ENCODE measurements at regions of chr19 and their contacts with region 1.

Region 1: DNA sequence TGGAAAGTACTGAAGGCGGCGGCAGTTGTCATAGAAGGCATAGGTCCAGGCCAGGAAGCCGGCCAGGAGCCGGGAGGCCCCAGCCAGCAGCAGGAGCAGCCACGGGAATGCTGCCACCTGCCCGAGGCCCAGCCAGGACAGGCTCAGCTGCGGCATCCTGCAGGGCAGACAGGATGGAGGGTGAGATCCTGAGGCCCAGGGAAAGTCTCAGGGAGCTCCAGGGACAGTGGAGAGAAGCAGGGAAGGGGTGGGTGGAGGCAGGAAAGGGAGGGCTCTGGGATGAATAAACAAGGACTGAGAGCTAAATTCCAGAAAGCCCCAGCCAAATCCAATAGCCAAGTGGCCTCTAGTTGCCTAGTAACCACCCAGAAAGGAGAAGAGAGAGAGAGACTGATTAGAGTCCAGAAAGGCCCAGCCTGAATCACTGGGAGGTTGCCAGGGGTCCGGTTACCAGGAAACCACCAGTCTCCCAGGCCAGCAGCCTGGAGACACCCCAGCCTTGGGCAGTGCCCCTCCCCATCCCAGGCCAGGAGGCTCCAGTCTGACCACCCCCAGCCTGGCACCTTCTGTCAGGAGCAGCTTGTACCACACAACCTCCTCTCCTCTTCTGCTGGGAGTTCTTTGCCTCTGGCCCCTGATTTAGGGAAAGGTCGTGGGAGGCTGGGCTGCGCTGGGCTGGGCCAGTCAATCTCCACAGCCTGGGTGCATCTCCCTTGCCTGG is 7.5 kb upstream of the OR10H5 start:
- DNase-seq: peak; percentile 50 to 90 (median 82)
- H3K4me3 ChIP-seq: peak overlapping the region in 26 of 59 donors; percentile 3 to 47 (median 32)
- H3K27ac ChIP-seq: peak overlapping the region; percentile 43 to 94 (median 84)
- H3K27me3 ChIP-seq: peaks cover 0 to 2% (median 0%) of the 10 kb centered on the region in 45 donors
- CTCF ChIP-seq: peak in 1 of 56 donors; percentile 9

Region 2: DNA sequence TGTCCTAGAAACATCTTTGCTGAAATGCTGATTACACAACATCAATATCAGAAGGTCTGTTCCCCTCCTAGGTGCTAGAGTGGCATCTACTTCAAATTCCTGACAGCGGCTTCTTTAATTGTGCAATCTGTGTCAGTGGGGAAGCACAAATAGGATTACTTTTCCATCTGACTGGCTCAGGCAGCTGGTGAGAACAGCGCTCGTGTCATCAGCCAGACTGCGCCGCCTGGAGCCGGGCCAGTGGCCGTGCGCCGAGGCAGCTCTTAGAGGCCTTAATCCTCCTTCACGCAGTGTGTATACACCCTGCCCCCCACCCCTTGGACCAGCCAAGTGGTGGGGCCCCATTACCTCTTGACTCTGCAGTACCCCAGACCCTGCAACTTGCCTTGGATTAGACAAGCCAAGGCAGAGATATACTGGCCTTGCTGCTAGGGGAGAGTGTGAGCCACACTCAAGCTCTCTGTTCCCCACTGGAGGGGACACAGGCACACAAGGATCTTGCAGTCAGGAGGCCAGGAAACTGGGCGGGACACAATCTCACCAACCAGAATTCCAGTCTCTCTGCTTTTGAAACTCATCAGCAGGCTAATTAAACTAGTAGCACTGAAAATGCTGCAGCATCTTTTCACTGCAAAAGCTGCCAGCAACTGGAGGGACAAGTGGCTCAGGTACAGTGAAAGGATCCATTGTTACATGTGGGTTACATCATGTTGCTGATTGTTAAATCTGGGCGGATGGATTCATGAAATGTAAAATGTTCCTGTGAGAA is 498.8 kb before region 1 on chr19:
- intact Hi-C with region 1: no loop called
- DNase-seq: peak; percentile 80 to 91 (median 88)
- H3K4me3 ChIP-seq: peak overlapping the region in 27 of 59 donors; percentile 1 to 40 (median 15)
- H3K27ac ChIP-seq: peak overlapping the region in 53 of 59 donors; percentile 0 to 87 (median 60)
- H3K27me3 ChIP-seq: no peaks in the 10 kb centered on the region
- CTCF ChIP-seq: peak in 51 of 56 donors; percentile 2 to 62 (median 39)

Region 3: DNA sequence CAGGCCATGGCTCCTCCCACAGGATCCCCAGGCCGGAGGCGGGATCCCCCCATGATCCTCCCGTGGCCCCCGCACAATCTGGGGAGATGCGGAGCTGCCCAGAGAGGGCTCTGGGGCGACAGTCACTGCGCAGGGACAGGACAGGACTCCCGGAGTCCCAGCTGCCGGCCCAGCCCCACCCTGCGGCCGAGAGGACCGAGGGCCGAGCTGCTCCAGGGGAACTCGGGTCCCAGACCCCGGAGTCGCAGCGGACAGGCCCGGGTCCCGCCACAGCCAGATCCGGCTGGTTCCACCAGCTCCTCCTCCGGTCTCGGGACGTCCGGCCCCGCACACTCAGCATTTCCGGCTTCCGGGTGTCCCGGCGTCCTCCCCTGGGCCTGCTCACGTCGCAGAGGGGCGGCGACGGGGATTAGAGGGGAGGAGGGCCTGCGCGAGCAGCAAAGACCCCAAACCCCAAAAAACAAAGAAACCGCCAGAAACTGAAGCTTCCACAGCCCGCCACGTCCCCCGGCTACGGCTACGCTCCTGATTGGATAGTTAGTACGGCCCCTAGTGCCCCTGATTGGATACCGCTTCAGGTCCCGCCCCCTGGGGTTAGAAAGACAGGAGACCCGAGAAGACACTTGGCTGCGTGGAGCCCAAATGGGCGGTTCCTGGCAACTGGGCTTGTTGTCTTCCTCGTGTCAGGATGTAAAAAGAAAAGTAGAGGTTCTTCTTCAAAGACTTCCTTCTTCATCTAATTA is 56.9 kb after region 1 on chr19:
- intact Hi-C with region 1: loop called in 1 of 2 experiments (anchors 5 kb)
- DNase-seq: peak; percentile 86 to 97 (median 96)
- H3K4me3 ChIP-seq: peak overlapping the region; percentile 55 to 98 (median 89)
- H3K27ac ChIP-seq: peak overlapping the region; percentile 55 to 99 (median 94)
- H3K27me3 ChIP-seq: no peaks in the 10 kb centered on the region
- CTCF ChIP-seq: peak in 29 of 56 donors; percentile 5 to 52 (median 19)